ENCODE measurements at regions of chr19 and their contacts with region 1.

Region 1: GRCh38 chr19:43446746-43447489 is 18.5 kb downstream of the LYPD3 start:
- DNase-seq: peak; percentile 82
- H3K4me3 Mint-ChIP-seq: no peak overlapping the region
- H3K27ac Mint-ChIP-seq: no peak overlapping the region
- H3K4me1 Mint-ChIP-seq: peaks cover 25% of the 10 kb centered on the region
- H3K27me3 Mint-ChIP-seq: no peaks in the 10 kb centered on the region

Region 2: DNA sequence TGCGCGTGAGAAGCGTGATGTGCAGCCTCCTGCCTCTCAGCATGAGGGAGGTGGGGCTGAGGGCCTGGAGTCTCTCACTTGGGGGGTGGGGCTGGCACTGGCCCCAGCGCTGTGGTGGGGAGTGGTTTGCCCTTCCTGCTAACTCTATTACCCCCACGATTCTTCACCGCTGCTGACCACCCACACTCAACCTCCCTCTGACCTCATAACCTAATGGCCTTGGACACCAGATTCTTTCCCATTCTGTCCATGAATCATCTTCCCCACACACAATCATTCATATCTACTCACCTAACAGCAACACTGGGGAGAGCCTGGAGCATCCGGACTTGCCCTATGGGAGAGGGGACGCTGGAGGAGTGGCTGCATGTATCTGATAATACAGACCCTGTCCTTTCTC is 84.7 kb before region 1 on chr19:
- CTCF ChIA-PET with region 1: no interaction called
- POLR2A ChIA-PET with region 1: no interaction called
- DNase-seq: no peak
- H3K4me3 Mint-ChIP-seq: no peak overlapping the region
- H3K27ac Mint-ChIP-seq: no peak overlapping the region
- H3K4me1 Mint-ChIP-seq: no peaks in the 10 kb centered on the region
- H3K27me3 Mint-ChIP-seq: no peaks in the 10 kb centered on the region

Region 3: GRCh38 chr19:43425567-43426392 is 21.1 kb before region 1 on chr19:
- CTCF ChIA-PET with region 1: interaction called, 193 read pairs
- POLR2A ChIA-PET with region 1: interaction called, 3 read pairs
- DNase-seq: no peak
- H3K4me3 Mint-ChIP-seq: no peak overlapping the region
- H3K27ac Mint-ChIP-seq: no peak overlapping the region
- H3K4me1 Mint-ChIP-seq: peaks cover 12% of the 10 kb centered on the region
- H3K27me3 Mint-ChIP-seq: peaks cover 2% of the 10 kb centered on the region

Region 4: DNA sequence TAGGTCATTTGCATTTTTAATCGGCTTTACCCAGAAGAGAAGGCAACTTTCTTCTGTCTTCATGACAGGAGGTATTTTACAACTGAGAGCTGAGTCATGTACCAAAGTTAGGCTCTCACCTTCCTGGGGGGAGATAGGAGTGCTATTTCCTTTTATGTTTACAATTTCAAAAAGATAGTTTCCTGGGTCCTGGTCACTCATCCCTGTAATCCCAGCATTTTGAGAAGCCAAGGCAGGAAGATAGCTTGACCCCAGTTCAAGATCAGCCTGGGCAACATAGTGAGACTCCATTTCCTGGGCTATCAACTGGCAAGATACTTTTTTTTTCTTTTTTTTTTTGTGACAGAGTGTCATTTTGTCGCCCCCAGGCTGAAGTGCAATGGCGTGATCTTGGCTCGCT is 10.9 kb after region 1 on chr19:
- CTCF ChIA-PET with region 1: interaction called, 49 read pairs
- POLR2A ChIA-PET with region 1: interaction called, 3 read pairs
- DNase-seq: no peak
- H3K4me3 Mint-ChIP-seq: no peak overlapping the region
- H3K27ac Mint-ChIP-seq: no peak overlapping the region
- H3K4me1 Mint-ChIP-seq: peaks cover 10% of the 10 kb centered on the region
- H3K27me3 Mint-ChIP-seq: peaks cover 8% of the 10 kb centered on the region

Region 5: GRCh38 chr19:43463381-43464136 is 16.6 kb after region 1 on chr19:
- CTCF ChIA-PET with region 1: interaction called, 49 read pairs
- POLR2A ChIA-PET with region 1: interaction called, 5 read pairs
- DNase-seq: peak; percentile 99
- H3K4me3 Mint-ChIP-seq: peak overlapping the region; percentile 88
- H3K27ac Mint-ChIP-seq: peak overlapping the region; percentile 93
- H3K4me1 Mint-ChIP-seq: peaks cover 34% of the 10 kb centered on the region
- H3K27me3 Mint-ChIP-seq: peaks cover 12% of the 10 kb centered on the region

Region 6: GRCh38 chr19:43503501-43504425 is 56.8 kb after region 1 on chr19:
- CTCF ChIA-PET with region 1: interaction called, 28 read pairs
- POLR2A ChIA-PET with region 1: interaction called, 10 read pairs
- DNase-seq: peak; percentile 98
- H3K4me3 Mint-ChIP-seq: peak overlapping the region; percentile 96
- H3K27ac Mint-ChIP-seq: peak overlapping the region; percentile 97
- H3K4me1 Mint-ChIP-seq: peaks cover 32% of the 10 kb centered on the region
- H3K27me3 Mint-ChIP-seq: no peaks in the 10 kb centered on the region

Region 7: DNA sequence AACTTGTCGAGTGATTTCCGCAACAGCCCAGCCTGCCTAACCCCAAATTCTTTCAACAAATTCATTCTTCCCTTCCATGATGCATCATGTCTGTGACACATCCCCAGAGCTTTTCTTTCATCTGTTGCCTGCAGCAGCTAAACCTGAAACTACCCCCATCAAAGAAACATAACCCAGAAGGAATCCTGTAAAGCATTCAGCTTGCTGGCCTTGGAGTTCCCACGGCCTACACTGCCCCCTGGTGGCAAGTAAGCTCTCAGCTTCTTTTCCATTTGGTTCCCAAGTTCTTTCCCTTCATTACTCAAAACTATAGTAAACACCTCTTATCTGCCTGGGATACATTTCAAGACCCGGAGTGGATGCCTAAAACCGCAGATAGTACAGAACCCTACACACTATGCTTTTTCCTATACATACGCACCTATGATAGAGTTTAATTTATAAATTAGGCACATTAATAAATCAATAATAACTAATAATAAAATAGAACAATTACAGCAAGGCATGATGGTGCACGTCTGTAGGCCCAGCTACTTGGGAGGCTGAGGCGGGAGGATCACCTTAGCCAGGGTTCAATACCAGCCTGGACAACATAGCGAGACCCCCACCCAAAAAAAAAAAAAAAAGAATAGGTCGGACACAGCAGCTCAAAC is 72.6 kb after region 1 on chr19:
- CTCF ChIA-PET with region 1: interaction called, 160 read pairs
- POLR2A ChIA-PET with region 1: interaction called, 15 read pairs
- DNase-seq: peak; percentile 80
- H3K4me3 Mint-ChIP-seq: no peak overlapping the region
- H3K27ac Mint-ChIP-seq: no peak overlapping the region
- H3K4me1 Mint-ChIP-seq: peaks cover 19% of the 10 kb centered on the region
- H3K27me3 Mint-ChIP-seq: no peaks in the 10 kb centered on the region

Region 8: GRCh38 chr19:43526884-43527859 is 80.3 kb after region 1 on chr19 and contains the start of gene ETHE1:
- CTCF ChIA-PET with region 1: interaction called, 33 read pairs
- POLR2A ChIA-PET with region 1: interaction called, 7 read pairs
- DNase-seq: peak; percentile 83
- H3K4me3 Mint-ChIP-seq: peak within 1 kb of the TSS; percentile 94
- H3K27ac Mint-ChIP-seq: peak within 1 kb of the TSS; percentile 79
- H3K4me1 Mint-ChIP-seq: peaks cover 28% of the 10 kb centered on the region
- H3K27me3 Mint-ChIP-seq: no peaks in the 10 kb centered on the region
- total RNA-seq, gene ETHE1: 90.7 to 91.1 TPM